ENCODE measurements at regions of chr3 and their contacts with region 1.

Region 1: DNA sequence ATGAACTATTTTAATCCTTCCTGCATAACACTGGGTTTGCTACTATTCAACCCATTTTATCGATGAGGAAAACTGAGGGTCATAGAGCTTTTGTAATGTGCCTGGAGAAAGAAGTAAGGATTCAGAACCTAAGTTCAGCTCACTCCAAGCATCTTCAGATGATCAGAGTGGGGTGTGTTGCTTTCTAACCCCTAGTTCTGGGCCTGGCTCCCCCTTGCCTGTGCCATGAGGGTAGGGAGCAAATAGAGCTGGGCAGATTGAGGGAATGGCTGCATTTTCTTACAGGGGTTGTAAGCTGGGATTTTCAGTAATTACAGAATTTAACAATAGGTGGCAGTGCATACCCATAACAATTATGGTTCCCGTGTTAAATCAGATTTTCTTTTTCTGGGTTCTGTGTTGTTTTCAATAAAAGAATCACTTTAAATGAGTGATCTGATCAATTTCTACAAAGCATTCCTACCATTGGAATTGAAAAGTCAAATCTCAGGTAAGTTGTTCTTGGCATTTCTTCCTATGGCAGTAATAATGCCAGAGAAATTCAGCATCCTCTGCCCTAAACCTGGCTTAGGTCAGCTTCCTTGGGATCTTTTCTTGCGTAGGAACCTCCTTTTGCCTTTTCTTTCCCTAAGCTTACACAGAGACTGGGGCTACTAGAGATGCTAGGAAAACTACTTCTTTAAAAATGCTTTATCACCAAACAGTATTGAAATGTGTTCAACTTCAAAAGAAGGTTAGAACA is 103.8 kb upstream of the IL12A start:
- DNase-seq: peak; percentile 46
- H3K4me3 Mint-ChIP-seq: no peak overlapping the region
- H3K27ac Mint-ChIP-seq: peak overlapping the region; percentile 31
- H3K4me1 Mint-ChIP-seq: peaks cover 26% of the 10 kb centered on the region
- H3K27me3 Mint-ChIP-seq: no peaks in the 10 kb centered on the region
- CTCF ChIP-seq: peak; percentile 65

Region 2: DNA sequence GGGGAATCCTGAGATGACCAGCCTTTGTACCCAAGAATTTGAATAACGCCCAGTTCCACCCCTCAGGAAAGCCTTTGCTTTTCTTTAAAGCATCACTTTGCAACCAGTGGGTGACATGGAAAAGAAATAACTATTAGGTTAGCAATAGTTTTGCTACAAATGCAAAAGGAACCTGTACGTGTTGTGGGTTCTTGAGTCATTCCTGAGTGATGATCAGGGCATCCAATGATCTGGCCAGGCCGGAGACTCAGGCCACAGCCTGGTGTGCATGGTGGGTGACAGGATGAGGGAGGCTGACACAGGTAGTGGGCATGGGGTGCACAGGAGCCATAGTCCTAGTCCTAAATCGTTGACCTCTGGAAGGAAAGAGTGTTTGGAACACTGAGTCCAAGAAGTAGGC is 217.6 kb before region 1 on chr3:
- CTCF ChIA-PET with region 1: no interaction called
- POLR2A ChIA-PET with region 1: no interaction called
- intact Hi-C with region 1: no loop called
- DNase-seq: no peak
- H3K4me3 Mint-ChIP-seq: no peak overlapping the region
- H3K27ac Mint-ChIP-seq: no peak overlapping the region
- H3K4me1 Mint-ChIP-seq: no peaks in the 10 kb centered on the region
- H3K27me3 Mint-ChIP-seq: no peaks in the 10 kb centered on the region
- CTCF ChIP-seq: no peak

Region 3: GRCh38 chr3:159749406-159749805 is 135.4 kb before region 1 on chr3:
- CTCF ChIA-PET with region 1: no interaction called
- POLR2A ChIA-PET with region 1: no interaction called
- intact Hi-C with region 1: no loop called
- DNase-seq: no peak
- H3K4me3 Mint-ChIP-seq: no peak overlapping the region
- H3K27ac Mint-ChIP-seq: no peak overlapping the region
- H3K4me1 Mint-ChIP-seq: peaks cover 8% of the 10 kb centered on the region
- H3K27me3 Mint-ChIP-seq: no peaks in the 10 kb centered on the region
- CTCF ChIP-seq: no peak

Region 4: DNA sequence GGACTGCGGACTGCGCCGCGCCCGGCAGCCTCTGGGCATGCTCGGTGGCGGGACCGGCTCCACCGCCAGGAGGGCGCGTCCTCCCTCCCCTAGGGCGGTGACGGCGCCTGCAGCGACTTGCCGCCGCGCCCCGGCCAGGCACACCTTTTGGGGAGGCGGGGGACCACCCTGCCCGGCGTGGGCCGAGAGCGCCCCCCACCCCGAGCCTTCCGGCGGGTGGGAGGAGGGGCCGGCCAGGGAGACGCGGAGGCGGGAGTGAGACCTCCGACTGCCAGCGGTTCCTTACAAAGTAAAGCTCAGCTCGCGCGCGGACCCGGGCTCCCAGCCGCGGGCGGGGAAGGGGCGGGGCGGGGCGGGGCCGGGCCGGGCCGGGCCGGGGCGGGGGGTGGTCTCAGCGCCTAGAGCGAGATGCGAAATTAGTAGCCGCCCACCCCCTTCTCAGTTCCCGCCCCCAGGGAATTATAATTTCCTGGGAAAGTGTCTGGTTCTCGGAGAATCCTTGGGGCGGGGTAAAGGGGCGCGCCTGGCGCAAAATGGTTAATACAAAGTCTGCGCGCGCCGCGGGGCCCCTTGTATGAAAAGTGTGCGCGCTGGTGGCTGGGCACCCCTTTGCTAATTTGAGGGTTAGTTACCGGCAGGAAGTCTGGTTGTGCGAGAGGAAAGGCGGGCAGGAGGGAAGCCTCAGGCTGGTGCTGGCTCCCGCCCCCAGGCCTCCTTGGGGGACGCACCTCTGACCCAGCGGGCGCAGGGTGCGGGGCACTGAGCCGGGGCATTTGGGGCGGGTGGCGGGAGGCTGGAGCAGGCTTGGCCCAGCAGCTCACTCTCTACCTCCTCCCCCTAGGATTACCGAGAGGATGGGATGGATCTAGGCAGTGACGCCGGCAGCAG is 121.0 kb before region 1 on chr3:
- CTCF ChIA-PET with region 1: interaction called, 4 read pairs
- POLR2A ChIA-PET with region 1: no interaction called
- intact Hi-C with region 1: loop called (anchors 2 kb)
- DNase-seq: peak; percentile 81
- H3K4me3 Mint-ChIP-seq: peak overlapping the region; percentile 81
- H3K27ac Mint-ChIP-seq: peak overlapping the region; percentile 90
- H3K4me1 Mint-ChIP-seq: peaks cover 40% of the 10 kb centered on the region
- H3K27me3 Mint-ChIP-seq: no peaks in the 10 kb centered on the region
- CTCF ChIP-seq: no peak

Region 5: GRCh38 chr3:159839561-159840379 is 45.1 kb before region 1 on chr3:
- CTCF ChIA-PET with region 1: interaction called, 26 read pairs
- POLR2A ChIA-PET with region 1: interaction called, 28 read pairs
- intact Hi-C with region 1: no loop called
- DNase-seq: no peak
- H3K4me3 Mint-ChIP-seq: peak within 1 kb of the TSS; percentile 66
- H3K27ac Mint-ChIP-seq: peak within 1 kb of the TSS; percentile 27
- H3K4me1 Mint-ChIP-seq: peaks cover 25% of the 10 kb centered on the region
- H3K27me3 Mint-ChIP-seq: no peaks in the 10 kb centered on the region
- CTCF ChIP-seq: no peak

Region 6: GRCh38 chr3:159897331-159898075 is 12.7 kb after region 1 on chr3:
- CTCF ChIA-PET with region 1: interaction called, 34 read pairs
- POLR2A ChIA-PET with region 1: interaction called, 3 read pairs
- intact Hi-C with region 1: no loop called
- DNase-seq: peak; percentile 21
- H3K4me3 Mint-ChIP-seq: no peak overlapping the region
- H3K27ac Mint-ChIP-seq: peak overlapping the region; percentile 12
- H3K4me1 Mint-ChIP-seq: peaks cover 6% of the 10 kb centered on the region
- H3K27me3 Mint-ChIP-seq: no peaks in the 10 kb centered on the region
- CTCF ChIP-seq: no peak

Region 7: GRCh38 chr3:159953325-159954085 is 68.7 kb after region 1 on chr3:
- CTCF ChIA-PET with region 1: no interaction called
- POLR2A ChIA-PET with region 1: no interaction called
- intact Hi-C with region 1: no loop called
- DNase-seq: no peak
- H3K4me3 Mint-ChIP-seq: no peak overlapping the region
- H3K27ac Mint-ChIP-seq: no peak overlapping the region
- H3K4me1 Mint-ChIP-seq: no peaks in the 10 kb centered on the region
- H3K27me3 Mint-ChIP-seq: no peaks in the 10 kb centered on the region
- CTCF ChIP-seq: no peak

Region 8: DNA sequence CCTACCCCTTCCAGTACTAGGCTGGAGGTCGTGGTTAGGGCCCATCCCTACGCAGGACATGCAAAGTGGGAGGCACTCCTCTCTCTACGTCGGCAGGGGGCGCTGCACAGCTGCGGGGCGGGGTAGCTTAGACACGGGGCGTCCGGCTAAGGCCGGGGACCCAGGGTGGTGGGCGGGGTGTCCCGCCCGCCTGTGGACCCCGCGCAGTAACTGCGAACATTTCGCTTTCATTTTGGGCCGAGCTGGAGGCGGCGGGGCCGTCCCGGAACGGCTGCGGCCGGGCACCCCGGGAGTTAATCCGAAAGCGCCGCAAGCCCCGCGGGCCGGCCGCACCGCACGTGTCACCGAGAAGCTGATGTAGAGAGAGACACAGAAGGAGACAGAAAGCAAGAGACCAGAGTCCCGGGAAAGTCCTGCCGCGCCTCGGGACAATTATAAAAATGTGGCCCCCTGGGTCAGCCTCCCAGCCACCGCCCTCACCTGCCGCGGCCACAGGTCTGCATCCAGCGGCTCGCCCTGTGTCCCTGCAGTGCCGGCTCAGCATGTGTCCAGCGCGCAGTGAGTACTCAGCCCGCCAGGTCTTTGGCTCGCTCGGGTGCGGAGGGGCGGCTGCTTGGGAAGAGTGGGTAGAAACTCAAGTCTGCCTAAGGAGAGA is 103.9 kb after region 1 on chr3 and contains the start of gene IL12A:
- CTCF ChIA-PET with region 1: interaction called, 102 read pairs
- POLR2A ChIA-PET with region 1: no interaction called
- intact Hi-C with region 1: loop called (anchors 5 kb)
- DNase-seq: peak; percentile 78
- H3K4me3 Mint-ChIP-seq: peak within 1 kb of the TSS; percentile 75
- H3K27ac Mint-ChIP-seq: peak within 1 kb of the TSS; percentile 18
- H3K4me1 Mint-ChIP-seq: peaks cover 27% of the 10 kb centered on the region
- H3K27me3 Mint-ChIP-seq: no peaks in the 10 kb centered on the region
- CTCF ChIP-seq: peak; percentile 92
- total RNA-seq, gene IL12A: 1.3 and 1.7 TPM in 2 replicates

Region 9: DNA sequence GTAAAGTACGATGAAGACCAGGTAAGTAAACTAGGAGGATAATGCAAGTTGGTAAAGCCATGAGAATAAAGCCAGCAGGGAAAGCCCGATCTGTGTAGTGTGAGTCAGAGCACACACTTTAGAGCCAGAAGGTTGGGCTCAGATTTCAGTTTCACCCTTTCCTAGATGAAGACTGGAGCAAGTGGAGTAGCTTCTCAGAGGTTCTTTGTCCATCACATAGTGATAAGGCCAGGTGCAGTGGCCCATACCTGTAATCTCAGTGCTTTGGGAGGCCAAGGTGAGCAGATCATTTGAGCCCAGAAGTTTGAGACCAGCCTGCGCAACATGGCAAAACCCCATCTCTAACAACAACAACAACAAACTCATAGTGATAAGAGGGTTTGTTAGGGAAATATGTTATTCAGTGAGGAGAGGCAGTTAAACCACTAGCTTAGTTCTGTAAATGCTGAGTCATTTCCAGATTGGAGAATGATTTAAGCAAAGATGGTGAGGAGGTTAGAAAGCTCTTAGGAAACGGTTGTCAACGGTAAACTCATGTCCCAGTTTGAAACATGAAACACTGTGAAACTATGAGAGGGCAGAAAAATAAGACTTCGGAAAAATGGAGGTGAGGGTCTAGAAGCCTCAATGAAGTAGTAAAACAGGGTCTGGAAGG is 142.8 kb after region 1 on chr3:
- CTCF ChIA-PET with region 1: interaction called, 13 read pairs
- POLR2A ChIA-PET with region 1: no interaction called
- intact Hi-C with region 1: no loop called
- DNase-seq: peak; percentile 56
- H3K4me3 Mint-ChIP-seq: no peak overlapping the region
- H3K27ac Mint-ChIP-seq: no peak overlapping the region
- H3K4me1 Mint-ChIP-seq: peaks cover 13% of the 10 kb centered on the region
- H3K27me3 Mint-ChIP-seq: no peaks in the 10 kb centered on the region
- CTCF ChIP-seq: no peak

Measured in MCF 10A (cell line).